ENCODE measurements at regions of chr3 and their contacts with region 1.

Region 1: DNA sequence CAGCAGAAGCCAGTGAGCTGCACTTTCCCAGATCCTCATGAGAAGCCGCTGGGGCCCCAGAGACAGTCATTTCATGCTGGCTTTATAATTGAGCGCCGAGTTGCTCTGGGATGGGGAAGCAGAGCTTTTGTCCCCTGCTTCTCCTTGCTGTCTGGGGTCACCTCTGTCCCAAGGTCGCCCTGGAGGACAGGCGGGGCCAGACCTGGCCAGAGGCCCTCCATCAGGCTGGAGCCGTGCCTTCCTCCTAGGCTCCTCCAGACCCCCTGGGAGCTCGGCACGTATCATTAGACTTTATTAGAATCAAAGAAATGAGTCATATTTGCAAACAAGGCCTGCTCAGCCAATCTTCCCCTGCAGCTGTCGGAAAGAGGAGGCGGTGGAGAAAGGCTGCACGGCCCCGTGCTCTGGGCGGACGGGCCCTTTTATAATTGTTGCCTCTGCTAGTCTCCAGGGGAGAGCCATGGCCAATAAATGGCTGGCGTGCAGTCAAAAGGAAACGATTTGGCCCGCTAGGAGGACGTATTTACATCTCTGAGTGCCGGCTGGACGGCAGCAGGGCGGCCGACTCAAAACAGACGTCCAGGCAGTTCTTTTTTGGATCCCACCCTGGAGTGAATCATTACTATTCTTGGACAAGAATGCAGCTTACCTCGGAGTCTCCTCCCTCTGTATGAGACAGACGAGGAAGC is 50.4 kb downstream of the SLC6A6 start:
- DNase-seq: peak; percentile 60 to 95 (median 82)

Region 2: DNA sequence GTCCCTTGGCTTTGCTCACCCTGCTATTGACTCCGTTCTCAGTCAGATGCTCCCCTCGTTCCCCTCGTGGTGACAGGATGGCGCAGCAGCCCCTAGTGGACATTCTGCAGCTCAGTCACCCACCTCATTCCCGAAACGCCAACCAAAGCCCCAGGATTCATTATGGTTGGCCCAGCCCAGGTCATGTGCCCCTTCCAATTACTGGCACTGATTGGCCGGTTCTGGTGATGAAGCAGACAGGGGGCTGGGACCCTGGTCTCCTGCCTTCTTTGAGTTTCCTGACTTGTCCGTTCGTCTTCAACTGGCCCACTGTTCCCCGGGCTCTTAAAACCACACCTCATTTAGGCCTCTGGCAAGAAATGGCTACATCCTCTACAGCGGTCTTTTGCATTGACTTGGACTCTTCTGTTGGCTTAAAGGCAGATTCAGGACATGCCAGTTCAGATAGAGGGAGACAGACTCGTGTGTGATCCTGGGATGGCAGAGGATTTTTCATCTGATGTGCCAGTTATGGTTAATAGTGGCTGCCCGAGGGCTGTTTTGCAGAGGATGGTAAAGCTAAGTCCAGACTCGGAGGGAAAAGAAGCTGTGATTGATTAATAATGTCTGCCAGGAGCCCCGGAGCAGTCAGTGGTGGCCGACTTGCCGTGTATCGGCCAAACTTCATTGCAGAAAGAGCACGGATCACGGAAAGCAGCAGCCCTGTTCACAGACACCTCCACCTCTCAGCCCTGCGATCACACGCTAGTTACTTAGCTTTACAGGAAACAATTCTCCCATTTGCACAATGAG is 236.4 kb before region 1 on chr3:
- intact Hi-C with region 1: no loop called
- DNase-seq: peak; percentile 56 to 92 (median 78)

Region 3: GRCh38 chr3:14402304-14402811 is 50.5 kb before region 1 on chr3 and contains the start of gene SLC6A6:
- intact Hi-C with region 1: loop called (anchors 10 kb)
- DNase-seq: peak; percentile 84 to 97 (median 93)

Region 4: GRCh38 chr3:15460891-15461531 is 1008.2 kb after region 1 on chr3:
- intact Hi-C with region 1: no loop called
- DNase-seq: peak in 2 of 42 donors; percentile 33 to 34